CD8-positive, alpha-beta T cell (primary cell): ENCODE measurements at regions of chr19 and their contacts with region 1.

Region 1: GRCh38 chr19:18450931-18451845 is 13.3 kb upstream of the ISYNA1 start:
- DNase-seq: peak; percentile 79 to 94 (median 85)
- ATAC-seq: peak; percentile 97
- H3K4me3 ChIP-seq: no peak overlapping the region
- H3K4me3 Mint-ChIP-seq: no peak overlapping the region
- H3K27ac ChIP-seq: no peak overlapping the region
- H3K27ac Mint-ChIP-seq: no peak overlapping the region
- H3K4me1 ChIP-seq: peaks cover 2% of the 10 kb centered on the region
- H3K4me1 Mint-ChIP-seq: peaks cover 2% of the 10 kb centered on the region
- H3K27me3 ChIP-seq: no peaks in the 10 kb centered on the region
- H3K27me3 Mint-ChIP-seq: no peaks in the 10 kb centered on the region
- CTCF ChIP-seq: peak; percentile 92

Region 2: DNA sequence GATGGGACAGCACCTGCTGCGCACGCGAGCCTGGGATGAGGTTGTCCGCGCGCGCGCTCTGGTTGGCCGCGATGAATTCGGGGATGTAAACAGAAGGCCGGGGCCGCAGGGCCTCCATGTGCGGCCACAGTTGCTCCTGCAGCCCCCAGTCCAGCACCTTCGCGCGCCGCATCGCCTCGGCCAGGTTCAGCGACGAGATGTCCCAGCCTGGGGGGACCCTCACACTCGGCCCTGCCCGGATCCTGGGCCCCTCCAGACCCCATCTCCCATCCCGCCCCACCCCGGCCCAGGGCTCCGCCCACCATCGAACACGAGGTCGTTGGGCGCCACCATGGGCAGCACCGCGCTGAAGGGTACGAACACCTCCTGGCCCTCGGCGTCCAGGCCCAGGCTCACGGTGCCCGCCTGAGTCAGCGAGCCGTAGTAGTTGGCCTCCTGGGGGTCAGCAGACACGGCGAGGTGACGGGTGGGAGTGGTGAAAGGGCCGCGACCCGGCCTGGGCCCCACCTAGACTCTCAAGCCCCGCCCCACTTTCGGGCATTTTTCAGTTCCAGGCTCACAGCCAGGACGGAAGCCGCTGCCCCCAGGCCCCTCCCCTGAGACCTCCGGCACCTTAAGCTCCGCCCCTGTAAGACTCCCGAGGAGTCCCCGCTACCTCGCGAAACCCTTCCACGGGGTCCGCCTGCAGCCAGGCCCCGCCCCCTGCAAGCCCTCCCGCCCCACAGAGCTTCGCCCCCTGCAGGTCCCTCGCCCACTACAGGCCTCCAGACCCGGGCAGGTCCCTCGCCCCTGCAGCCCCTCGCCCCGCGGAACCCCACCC is 14.3 kb before region 1 on chr19:
- CTCF ChIA-PET with region 1: interaction called, 11 read pairs
- POLR2A ChIA-PET with region 1: no interaction called
- intact Hi-C with region 1: no loop called
- DNase-seq: peak; percentile 65 to 94 (median 87)
- ATAC-seq: peak; percentile 74
- H3K4me3 ChIP-seq: peak overlapping the region; percentile 57 to 65
- H3K4me3 Mint-ChIP-seq: peak overlapping the region; percentile 81
- H3K27ac ChIP-seq: peak overlapping the region in 1 of 2 experiments; percentile 48
- H3K27ac Mint-ChIP-seq: peak overlapping the region; percentile 41
- H3K4me1 ChIP-seq: peaks cover 26% of the 10 kb centered on the region
- H3K4me1 Mint-ChIP-seq: peaks cover 24% of the 10 kb centered on the region
- H3K27me3 ChIP-seq: no peaks in the 10 kb centered on the region
- H3K27me3 Mint-ChIP-seq: no peaks in the 10 kb centered on the region
- CTCF ChIP-seq: no peak

Region 3: DNA sequence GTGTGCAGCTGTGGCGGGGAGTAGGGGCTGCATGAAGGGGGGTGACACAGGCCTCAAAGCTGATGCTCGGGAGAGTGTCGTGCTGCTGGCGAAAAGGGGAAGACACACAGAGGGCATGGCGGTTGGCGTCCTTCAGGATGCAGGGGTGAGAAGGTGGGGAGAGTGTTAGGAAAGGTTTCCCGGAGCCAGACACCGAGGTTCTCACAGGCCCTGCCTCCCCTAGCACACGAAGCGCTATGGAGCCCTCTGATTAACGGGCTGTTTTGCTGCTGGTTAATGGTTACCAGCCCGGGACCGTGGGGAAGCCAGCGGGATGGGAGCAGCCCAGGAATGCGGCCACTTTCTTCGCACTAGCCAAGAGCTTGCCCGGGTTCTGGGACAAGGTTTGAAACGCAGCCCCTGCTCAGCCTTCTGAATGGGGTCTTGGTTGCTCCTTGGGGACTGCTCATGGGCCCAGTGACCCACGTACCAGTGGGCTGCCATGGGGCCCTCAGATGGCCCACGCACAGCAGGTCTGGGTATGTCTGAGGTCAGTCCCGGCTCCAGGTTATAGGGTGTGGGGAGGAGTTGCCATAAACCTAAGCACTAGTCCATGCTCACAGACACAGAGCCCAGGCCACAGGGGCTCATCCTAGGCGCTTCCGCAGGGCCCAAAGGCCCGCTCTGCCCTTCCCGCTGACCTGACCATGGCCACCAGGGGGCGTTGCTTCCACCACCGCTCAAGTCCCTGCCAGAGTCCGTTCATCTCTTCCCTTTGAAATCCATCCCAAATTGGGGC is 18.1 kb after region 1 on chr19:
- CTCF ChIA-PET with region 1: interaction called, 96 read pairs
- POLR2A ChIA-PET with region 1: no interaction called
- intact Hi-C with region 1: no loop called
- DNase-seq: peak; percentile 24 to 77 (median 62)
- ATAC-seq: peak; percentile 55
- H3K4me3 ChIP-seq: no peak overlapping the region
- H3K4me3 Mint-ChIP-seq: no peak overlapping the region
- H3K27ac ChIP-seq: no peak overlapping the region
- H3K27ac Mint-ChIP-seq: no peak overlapping the region
- H3K4me1 ChIP-seq: peaks cover 13% of the 10 kb centered on the region
- H3K4me1 Mint-ChIP-seq: peaks cover 21% of the 10 kb centered on the region
- H3K27me3 ChIP-seq: no peaks in the 10 kb centered on the region
- H3K27me3 Mint-ChIP-seq: no peaks in the 10 kb centered on the region
- CTCF ChIP-seq: peak; percentile 56

Region 4: DNA sequence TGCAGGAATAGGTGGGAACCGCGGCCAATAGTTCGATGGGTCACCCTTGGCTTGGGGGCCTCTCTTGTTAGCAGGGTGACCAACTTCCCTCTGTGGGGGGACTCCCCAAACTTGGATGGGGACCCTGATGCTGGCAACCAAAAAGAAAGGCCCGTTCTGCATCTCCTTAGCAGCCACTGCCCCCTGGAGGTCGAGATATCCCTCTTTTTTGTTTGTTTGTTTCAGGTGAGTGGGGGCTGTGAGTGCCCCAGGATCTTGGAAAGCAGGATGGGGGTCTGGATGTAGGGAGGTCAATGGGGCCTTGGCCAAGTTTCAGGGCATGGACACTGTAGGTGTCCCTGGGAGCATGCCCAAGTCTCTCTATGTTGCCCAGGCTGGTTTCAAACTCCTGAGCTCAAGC is 224.6 kb after region 1 on chr19:
- CTCF ChIA-PET with region 1: interaction called, 3 read pairs
- POLR2A ChIA-PET with region 1: no interaction called
- intact Hi-C with region 1: loop called (anchors 5 to 10 kb)
- DNase-seq: peak in 4 of 9 experiments; percentile 22 to 50 (median 29)
- ATAC-seq: no peak
- H3K4me3 ChIP-seq: no peak overlapping the region
- H3K4me3 Mint-ChIP-seq: no peak overlapping the region
- H3K27ac ChIP-seq: no peak overlapping the region
- H3K27ac Mint-ChIP-seq: no peak overlapping the region
- H3K4me1 ChIP-seq: no peaks in the 10 kb centered on the region
- H3K4me1 Mint-ChIP-seq: no peaks in the 10 kb centered on the region
- H3K27me3 ChIP-seq: no peaks in the 10 kb centered on the region
- H3K27me3 Mint-ChIP-seq: no peaks in the 10 kb centered on the region
- CTCF ChIP-seq: no peak

Region 5: GRCh38 chr19:18683213-18683939 is 232.2 kb after region 1 on chr19 and contains the start of gene CRTC1:
- CTCF ChIA-PET with region 1: no interaction called
- POLR2A ChIA-PET with region 1: no interaction called
- intact Hi-C with region 1: loop called (anchors 5 to 10 kb)
- DNase-seq: peak; percentile 90 to 97 (median 95)
- ATAC-seq: peak; percentile 90
- H3K4me3 ChIP-seq: peak within 1 kb of the TSS; percentile 63 to 91
- H3K4me3 Mint-ChIP-seq: peak within 1 kb of the TSS; percentile 87
- H3K27ac ChIP-seq: peak within 1 kb of the TSS; percentile 65 to 67
- H3K27ac Mint-ChIP-seq: peak within 1 kb of the TSS; percentile 82
- H3K4me1 ChIP-seq: peaks cover 20% of the 10 kb centered on the region
- H3K4me1 Mint-ChIP-seq: peaks cover 33% of the 10 kb centered on the region
- H3K27me3 ChIP-seq: no peaks in the 10 kb centered on the region
- H3K27me3 Mint-ChIP-seq: no peaks in the 10 kb centered on the region
- CTCF ChIP-seq: no peak
- total RNA-seq, gene CRTC1: 7.1 to 7.5 TPM

Region 6: DNA sequence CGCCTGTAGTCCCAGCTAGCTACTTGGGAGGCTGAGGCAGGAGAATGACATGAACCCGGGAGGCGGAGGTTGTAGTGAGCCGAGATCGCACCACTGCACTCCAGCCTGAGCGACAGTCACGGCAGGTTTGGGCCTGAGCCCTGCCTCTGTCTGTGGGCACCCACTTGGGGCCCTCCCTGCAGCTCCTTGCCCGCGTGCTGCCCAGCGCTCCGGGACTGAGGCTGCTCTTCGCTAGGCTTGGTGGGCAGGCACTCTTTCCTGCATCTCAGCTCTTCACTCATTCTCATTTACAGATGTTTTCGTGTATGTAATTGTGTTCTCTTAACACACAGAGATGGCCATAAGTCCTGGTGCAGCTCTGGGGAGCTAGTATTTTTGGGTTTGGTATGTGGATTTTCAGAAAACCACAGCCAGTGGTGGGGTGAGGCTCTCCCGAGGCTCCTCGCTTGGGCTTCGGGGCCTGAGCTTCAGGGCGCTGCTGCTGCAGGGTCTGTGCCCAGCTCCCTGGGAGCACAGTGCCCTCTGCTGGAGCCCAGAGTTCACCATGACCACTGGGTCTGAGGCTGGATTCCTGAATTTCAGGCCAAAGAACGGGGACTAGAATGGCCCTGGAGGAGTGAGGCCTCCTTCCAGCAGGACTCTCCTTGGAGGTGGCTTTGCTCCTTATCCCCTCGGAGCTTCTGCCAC is 395.8 kb after region 1 on chr19:
- CTCF ChIA-PET with region 1: interaction called, 16 read pairs
- POLR2A ChIA-PET with region 1: no interaction called
- intact Hi-C with region 1: loop called (anchors 1 kb)
- DNase-seq: peak; percentile 37 to 81 (median 73)
- ATAC-seq: peak; percentile 65
- H3K4me3 ChIP-seq: no peak overlapping the region
- H3K4me3 Mint-ChIP-seq: peak overlapping the region; percentile 36
- H3K27ac ChIP-seq: no peak overlapping the region
- H3K27ac Mint-ChIP-seq: no peak overlapping the region
- H3K4me1 ChIP-seq: peaks cover 40% of the 10 kb centered on the region
- H3K4me1 Mint-ChIP-seq: peaks cover 56% of the 10 kb centered on the region
- H3K27me3 ChIP-seq: no peaks in the 10 kb centered on the region
- H3K27me3 Mint-ChIP-seq: no peaks in the 10 kb centered on the region
- CTCF ChIP-seq: peak; percentile 78

Region 7: GRCh38 chr19:18865973-18866799 is 415.0 kb after region 1 on chr19:
- CTCF ChIA-PET with region 1: interaction called, 6 read pairs
- POLR2A ChIA-PET with region 1: no interaction called
- intact Hi-C with region 1: loop called in 1 of 2 experiments (anchors 1 kb)
- DNase-seq: peak in 8 of 9 experiments; percentile 40 to 75 (median 62)
- ATAC-seq: peak; percentile 80
- H3K4me3 ChIP-seq: no peak overlapping the region
- H3K4me3 Mint-ChIP-seq: no peak overlapping the region
- H3K27ac ChIP-seq: no peak overlapping the region
- H3K27ac Mint-ChIP-seq: no peak overlapping the region
- H3K4me1 ChIP-seq: peaks cover 4% of the 10 kb centered on the region
- H3K4me1 Mint-ChIP-seq: peaks cover 5% of the 10 kb centered on the region
- H3K27me3 ChIP-seq: peaks cover 0 to 4% of the 10 kb centered on the region in 2 experiments
- H3K27me3 Mint-ChIP-seq: peaks cover 3% of the 10 kb centered on the region
- CTCF ChIP-seq: peak; percentile 87